ENCODE measurements at regions of chr20 and their contacts with region 1.

Region 1: DNA sequence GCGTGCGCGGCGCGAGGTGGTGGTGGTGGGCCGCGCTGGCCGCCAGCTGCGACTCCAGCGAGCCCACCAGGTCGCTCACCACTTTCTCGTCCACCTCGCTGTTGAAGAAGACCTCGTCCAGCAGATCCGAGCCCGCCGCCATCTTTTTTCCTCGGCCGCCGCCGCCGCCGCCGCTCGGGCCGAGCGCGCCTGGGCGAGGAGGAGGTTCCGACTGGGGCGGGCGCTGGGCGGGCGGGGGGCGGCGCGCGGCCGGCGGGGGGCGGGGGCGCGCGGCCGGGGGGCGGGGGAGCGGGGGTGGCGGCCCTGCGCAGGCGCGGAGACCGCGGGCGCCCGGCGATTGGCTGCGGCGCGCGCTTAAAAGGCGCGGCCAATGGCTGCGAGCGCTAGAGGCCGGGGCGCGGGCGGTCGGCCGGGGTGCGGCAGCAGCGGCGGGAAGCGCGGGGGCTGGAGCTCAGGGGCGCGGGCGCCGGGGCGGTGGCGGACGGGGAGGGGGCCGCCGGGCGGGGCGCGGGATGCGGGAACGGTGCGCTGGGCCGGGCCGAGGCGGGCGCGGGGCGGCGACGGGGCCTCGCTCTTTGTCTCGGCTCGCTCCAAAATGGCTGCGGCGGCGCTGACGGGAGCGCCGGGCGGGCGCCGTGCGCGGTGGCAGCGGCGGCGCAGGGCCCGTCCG is at the start of gene TAF4:
- DNase-seq: peak; percentile 77
- H3K4me3 ChIP-seq: peak within 1 kb of the TSS; percentile 54
- H3K27ac ChIP-seq: peak within 1 kb of the TSS; percentile 88
- H3K4me1 ChIP-seq: peaks cover 21% of the 10 kb centered on the region
- H3K27me3 ChIP-seq: no peaks in the 10 kb centered on the region
- CTCF ChIP-seq: no peak
- total RNA-seq, gene TAF4: 32.7 and 37.0 TPM in 2 replicates

Region 2: DNA sequence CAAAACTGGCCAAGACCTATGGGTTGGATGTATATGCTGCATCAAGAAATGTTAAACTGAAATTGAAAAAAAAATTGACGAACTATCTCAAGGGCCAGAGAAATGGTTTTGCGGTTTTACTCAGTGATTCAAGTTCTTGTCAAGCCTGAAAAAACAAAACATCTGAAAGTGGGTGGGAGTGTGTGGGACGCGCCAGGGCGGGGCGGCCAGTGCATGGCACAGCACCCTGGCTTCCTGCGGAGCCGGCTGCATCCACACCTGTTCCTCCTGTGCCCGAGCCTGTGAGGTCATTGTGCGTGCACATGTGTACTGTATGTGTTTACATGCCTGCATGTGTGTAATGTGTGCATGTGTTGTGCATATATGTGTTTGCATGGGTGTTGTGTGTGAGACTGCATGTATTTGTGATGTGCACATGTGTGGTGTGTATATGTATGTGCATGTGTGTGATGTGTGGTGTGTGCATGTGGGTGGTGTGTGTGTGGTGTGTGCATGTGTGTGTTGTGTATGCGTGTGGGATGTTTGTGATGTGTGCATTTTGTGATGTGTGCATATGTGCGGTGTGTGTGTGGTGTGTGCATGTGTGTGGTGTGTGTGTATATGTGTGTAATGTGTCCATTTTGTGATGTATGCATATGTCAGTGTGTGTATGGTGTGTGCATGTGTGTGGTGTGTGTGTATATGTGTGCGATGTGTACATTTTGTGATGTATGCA is 754.0 kb before region 1 on chr20:
- CTCF ChIA-PET with region 1: no interaction called
- POLR2A ChIA-PET with region 1: no interaction called
- intact Hi-C with region 1: no loop called
- DNase-seq: no peak
- H3K4me3 ChIP-seq: no peak overlapping the region
- H3K27ac ChIP-seq: no peak overlapping the region
- H3K4me1 ChIP-seq: no peaks in the 10 kb centered on the region
- H3K27me3 ChIP-seq: peaks cover 9% of the 10 kb centered on the region
- CTCF ChIP-seq: no peak

Region 3: GRCh38 chr20:62050166-62051120 is 15.4 kb before region 1 on chr20:
- CTCF ChIA-PET with region 1: no interaction called
- POLR2A ChIA-PET with region 1: no interaction called
- intact Hi-C with region 1: no loop called
- DNase-seq: no peak
- H3K4me3 ChIP-seq: no peak overlapping the region
- H3K27ac ChIP-seq: no peak overlapping the region
- H3K4me1 ChIP-seq: no peaks in the 10 kb centered on the region
- H3K27me3 ChIP-seq: no peaks in the 10 kb centered on the region
- CTCF ChIP-seq: no peak

Region 4: GRCh38 chr20:62121776-62122631 is 56.2 kb after region 1 on chr20 and contains the start of gene LSM14B:
- CTCF ChIA-PET with region 1: no interaction called
- POLR2A ChIA-PET with region 1: interaction called, 3 read pairs
- intact Hi-C with region 1: loop called (anchors 2 kb)
- DNase-seq: peak; percentile 98
- H3K4me3 ChIP-seq: peak within 1 kb of the TSS; percentile 89
- H3K27ac ChIP-seq: peak within 1 kb of the TSS; percentile 92
- H3K4me1 ChIP-seq: peaks cover 17% of the 10 kb centered on the region
- H3K27me3 ChIP-seq: no peaks in the 10 kb centered on the region
- CTCF ChIP-seq: no peak
- total RNA-seq, gene LSM14B: 72.5 and 80.2 TPM in 2 replicates